ENCODE measurements at regions of chr1 and their contacts with region 1.

Region 1: DNA sequence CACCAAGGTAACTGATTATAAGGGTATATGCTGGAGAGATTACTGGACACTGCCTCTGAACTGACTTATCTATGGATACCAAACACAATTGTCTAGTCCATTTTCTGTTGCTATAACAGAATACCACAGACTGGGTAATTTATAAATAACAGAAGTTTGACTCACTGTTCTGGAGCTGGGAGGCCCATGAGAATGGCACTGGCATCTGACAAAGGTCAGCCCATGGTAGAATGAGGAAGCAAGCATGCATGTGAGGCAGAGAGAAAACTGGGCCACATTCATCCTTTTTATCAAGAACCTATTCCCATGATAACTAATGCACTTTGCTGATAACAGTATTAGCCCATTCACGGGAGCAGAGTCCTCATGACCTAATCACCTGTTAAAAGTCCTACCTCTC is 37.4 kb downstream of the FCER1A start:
- DNase-seq: no peak
- H3K4me3 ChIP-seq: no peak overlapping the region
- CTCF ChIP-seq: no peak
- POLR2A ChIP-seq: no peak

Region 2: GRCh38 chr1:159040206-159040605 is 299.3 kb before region 1 on chr1:
- intact Hi-C with region 1: loop called (anchors 5 kb)
- DNase-seq: no peak
- H3K4me3 ChIP-seq: no peak overlapping the region
- CTCF ChIP-seq: no peak
- POLR2A ChIP-seq: no peak

Region 3: DNA sequence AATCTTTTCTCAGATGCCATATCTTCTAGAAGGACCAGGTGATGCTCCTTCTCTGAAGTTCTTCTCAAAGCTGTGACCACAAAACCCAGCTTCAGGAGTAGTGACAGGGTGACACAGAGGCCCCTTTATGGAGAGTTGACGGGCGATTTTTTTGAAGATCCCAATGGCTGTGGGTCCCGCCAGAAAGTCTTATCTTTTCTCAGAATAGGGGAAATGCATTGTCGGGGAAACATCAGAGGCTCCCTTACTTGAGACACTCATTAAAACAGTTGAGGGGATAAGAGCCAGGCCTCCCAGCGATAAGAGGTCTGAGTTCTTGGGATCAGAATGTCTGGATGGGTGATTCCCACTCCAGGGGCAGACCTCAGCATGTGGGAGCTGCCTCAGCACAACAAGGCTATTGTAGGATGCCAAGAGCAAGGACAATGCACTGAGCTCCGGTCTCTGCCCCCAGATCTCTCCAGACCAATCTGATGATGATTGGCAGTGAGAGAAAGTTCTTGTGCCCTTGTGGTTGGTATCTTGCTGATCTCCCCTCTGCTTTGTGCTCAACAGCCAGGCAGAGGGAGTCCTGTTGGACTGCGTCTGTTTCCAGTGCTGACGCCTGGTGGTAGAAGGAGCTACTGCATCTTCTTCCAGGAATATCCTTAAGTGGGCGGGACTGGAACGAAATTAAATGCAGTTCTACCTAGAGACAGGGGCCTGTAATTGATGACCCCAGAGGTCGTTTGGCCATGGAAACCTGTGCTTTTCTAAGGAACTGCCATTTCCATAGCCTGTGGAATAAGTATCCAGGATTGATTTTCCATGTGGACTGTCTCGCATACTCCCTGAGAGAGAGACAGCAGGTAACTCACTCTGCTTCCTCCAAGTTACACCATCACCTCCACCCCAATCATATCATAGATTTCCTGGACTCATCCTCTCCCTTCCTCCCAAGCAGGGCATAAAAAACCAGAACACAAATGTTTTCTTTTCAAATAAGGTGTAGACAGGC is 141.7 kb before region 1 on chr1:
- intact Hi-C with region 1: no loop called
- DNase-seq: peak; percentile 71 to 90
- H3K4me3 ChIP-seq: no peak overlapping the region
- CTCF ChIP-seq: peak in 1 of 3 donors; percentile 65
- POLR2A ChIP-seq: no peak

Region 4: DNA sequence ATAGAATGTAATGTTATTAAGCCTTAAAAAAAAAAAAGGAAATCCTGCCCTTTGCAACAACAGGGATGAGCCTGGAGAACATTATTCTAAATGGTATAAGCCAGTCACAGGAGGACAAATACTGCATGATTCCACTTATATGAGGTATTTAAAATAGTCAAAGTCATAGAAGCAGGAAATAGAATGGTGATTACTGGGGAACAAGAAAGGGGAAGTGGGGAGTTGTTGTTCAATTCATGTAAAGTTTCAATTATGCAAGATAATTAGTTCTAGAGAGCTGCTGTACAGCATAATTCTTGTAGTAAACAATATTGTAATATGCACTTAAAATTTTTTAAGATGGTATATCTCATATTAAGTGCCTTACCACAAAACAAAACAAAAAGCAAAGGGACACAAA is 24.2 kb before region 1 on chr1:
- intact Hi-C with region 1: loop called (anchors 2 kb)
- DNase-seq: no peak
- H3K4me3 ChIP-seq: no peak overlapping the region
- CTCF ChIP-seq: no peak
- POLR2A ChIP-seq: no peak

Region 5: GRCh38 chr1:159370855-159371254 is 31.3 kb after region 1 on chr1:
- intact Hi-C with region 1: loop called (anchors 2 kb)
- DNase-seq: no peak
- H3K4me3 ChIP-seq: no peak overlapping the region
- CTCF ChIP-seq: no peak
- POLR2A ChIP-seq: no peak